B cell (primary cell): ENCODE measurements at regions of chrX and their contacts with region 1.

Region 1: GRCh38 chrX:9341291-9342201 is 123.3 kb upstream of the TBL1X start:
- DNase-seq: peak; percentile 90
- ATAC-seq: peak; percentile 61
- H3K4me3 ChIP-seq: peak overlapping the region; percentile 30 to 71 (median 47)
- H3K4me3 Mint-ChIP-seq: peak overlapping the region; percentile 84
- H3K27ac ChIP-seq: peak overlapping the region; percentile 83 to 93
- H3K27ac Mint-ChIP-seq: peak overlapping the region; percentile 92
- H3K4me1 ChIP-seq: peaks cover 29 to 33% of the 10 kb centered on the region in 2 donors
- H3K4me1 Mint-ChIP-seq: peaks cover 30% of the 10 kb centered on the region
- H3K27me3 ChIP-seq: no peaks in the 10 kb centered on the region
- H3K27me3 Mint-ChIP-seq: no peaks in the 10 kb centered on the region
- CTCF ChIP-seq: no peak

Region 2: DNA sequence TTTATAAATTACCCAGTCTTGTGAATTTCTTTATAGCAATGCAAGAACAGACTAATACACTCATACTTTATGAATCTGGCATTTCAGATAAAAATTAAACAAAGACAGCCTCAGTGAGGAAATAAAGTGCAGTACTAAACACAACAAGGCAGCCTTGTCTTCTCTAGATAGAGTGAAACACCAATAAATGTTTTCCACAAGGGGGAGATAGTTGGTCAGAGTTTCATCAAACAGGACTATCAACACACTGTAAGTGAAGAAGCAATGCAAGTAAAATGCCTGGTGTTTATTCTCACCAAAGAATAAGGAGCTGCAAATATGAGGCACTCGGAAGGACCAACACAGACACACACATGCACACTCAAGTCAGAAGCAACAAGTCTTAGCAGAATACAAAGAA is 370.4 kb before region 1 on chrX:
- CTCF ChIA-PET with region 1: no interaction called
- POLR2A ChIA-PET with region 1: interaction called, 3 read pairs
- intact Hi-C with region 1: loop called (anchors 2 kb)
- DNase-seq: peak; percentile 53
- ATAC-seq: peak; percentile 47
- H3K4me3 ChIP-seq: no peak overlapping the region
- H3K4me3 Mint-ChIP-seq: no peak overlapping the region
- H3K27ac ChIP-seq: no peak overlapping the region
- H3K27ac Mint-ChIP-seq: no peak overlapping the region
- H3K4me1 ChIP-seq: no peaks in the 10 kb centered on the region
- H3K4me1 Mint-ChIP-seq: no peaks in the 10 kb centered on the region
- H3K27me3 ChIP-seq: peaks cover 0 to 2% (median 0%) of the 10 kb centered on the region in 4 experiments
- H3K27me3 Mint-ChIP-seq: peaks cover 6% of the 10 kb centered on the region
- CTCF ChIP-seq: peak; percentile 35

Region 3: GRCh38 chrX:9141496-9141895 is 200.1 kb before region 1 on chrX:
- CTCF ChIA-PET with region 1: no interaction called
- POLR2A ChIA-PET with region 1: no interaction called
- intact Hi-C with region 1: no loop called
- DNase-seq: no peak
- ATAC-seq: no peak
- H3K4me3 ChIP-seq: no peak overlapping the region
- H3K4me3 Mint-ChIP-seq: no peak overlapping the region
- H3K27ac ChIP-seq: no peak overlapping the region
- H3K27ac Mint-ChIP-seq: no peak overlapping the region
- H3K4me1 ChIP-seq: no peaks in the 10 kb centered on the region
- H3K4me1 Mint-ChIP-seq: no peaks in the 10 kb centered on the region
- H3K27me3 ChIP-seq: no peaks in the 10 kb centered on the region
- H3K27me3 Mint-ChIP-seq: peaks cover 12% of the 10 kb centered on the region
- CTCF ChIP-seq: no peak

Region 4: GRCh38 chrX:9279234-9279544 is 62.4 kb before region 1 on chrX:
- CTCF ChIA-PET with region 1: no interaction called
- POLR2A ChIA-PET with region 1: no interaction called
- intact Hi-C with region 1: loop called (anchors 10 kb)
- DNase-seq: no peak
- ATAC-seq: no peak
- H3K4me3 ChIP-seq: no peak overlapping the region
- H3K4me3 Mint-ChIP-seq: no peak overlapping the region
- H3K27ac ChIP-seq: no peak overlapping the region
- H3K27ac Mint-ChIP-seq: no peak overlapping the region
- H3K4me1 ChIP-seq: no peaks in the 10 kb centered on the region
- H3K4me1 Mint-ChIP-seq: peaks cover 7% of the 10 kb centered on the region
- H3K27me3 ChIP-seq: no peaks in the 10 kb centered on the region
- H3K27me3 Mint-ChIP-seq: no peaks in the 10 kb centered on the region
- CTCF ChIP-seq: no peak

Region 5: GRCh38 chrX:9464435-9465371 is 123.2 kb after region 1 on chrX and contains the start of gene TBL1X:
- CTCF ChIA-PET with region 1: interaction called, 28 read pairs
- POLR2A ChIA-PET with region 1: interaction called, 20 read pairs
- intact Hi-C with region 1: loop called (anchors 1 kb)
- DNase-seq: peak; percentile 65
- ATAC-seq: peak; percentile 70
- H3K4me3 ChIP-seq: peak within 1 kb of the TSS in 4 of 5 experiments; percentile 60 to 73 (median 69)
- H3K4me3 Mint-ChIP-seq: peak within 1 kb of the TSS; percentile 78
- H3K27ac ChIP-seq: peak within 1 kb of the TSS; percentile 18 to 61
- H3K27ac Mint-ChIP-seq: peak within 1 kb of the TSS; percentile 77
- H3K4me1 ChIP-seq: peaks cover 33 to 43% of the 10 kb centered on the region in 2 donors
- H3K4me1 Mint-ChIP-seq: peaks cover 45% of the 10 kb centered on the region
- H3K27me3 ChIP-seq: no peaks in the 10 kb centered on the region
- H3K27me3 Mint-ChIP-seq: no peaks in the 10 kb centered on the region
- CTCF ChIP-seq: no peak
- total RNA-seq, gene TBL1X: 61.3 and 65.1 TPM in 2 replicates

Region 6: GRCh38 chrX:9494771-9495170 is 153.2 kb after region 1 on chrX:
- CTCF ChIA-PET with region 1: no interaction called
- POLR2A ChIA-PET with region 1: no interaction called
- intact Hi-C with region 1: no loop called
- DNase-seq: no peak
- ATAC-seq: no peak
- H3K4me3 ChIP-seq: no peak overlapping the region
- H3K4me3 Mint-ChIP-seq: no peak overlapping the region
- H3K27ac ChIP-seq: no peak overlapping the region
- H3K27ac Mint-ChIP-seq: no peak overlapping the region
- H3K4me1 ChIP-seq: no peaks in the 10 kb centered on the region
- H3K4me1 Mint-ChIP-seq: peaks cover 28% of the 10 kb centered on the region
- H3K27me3 ChIP-seq: no peaks in the 10 kb centered on the region
- H3K27me3 Mint-ChIP-seq: no peaks in the 10 kb centered on the region
- CTCF ChIP-seq: no peak

Region 7: DNA sequence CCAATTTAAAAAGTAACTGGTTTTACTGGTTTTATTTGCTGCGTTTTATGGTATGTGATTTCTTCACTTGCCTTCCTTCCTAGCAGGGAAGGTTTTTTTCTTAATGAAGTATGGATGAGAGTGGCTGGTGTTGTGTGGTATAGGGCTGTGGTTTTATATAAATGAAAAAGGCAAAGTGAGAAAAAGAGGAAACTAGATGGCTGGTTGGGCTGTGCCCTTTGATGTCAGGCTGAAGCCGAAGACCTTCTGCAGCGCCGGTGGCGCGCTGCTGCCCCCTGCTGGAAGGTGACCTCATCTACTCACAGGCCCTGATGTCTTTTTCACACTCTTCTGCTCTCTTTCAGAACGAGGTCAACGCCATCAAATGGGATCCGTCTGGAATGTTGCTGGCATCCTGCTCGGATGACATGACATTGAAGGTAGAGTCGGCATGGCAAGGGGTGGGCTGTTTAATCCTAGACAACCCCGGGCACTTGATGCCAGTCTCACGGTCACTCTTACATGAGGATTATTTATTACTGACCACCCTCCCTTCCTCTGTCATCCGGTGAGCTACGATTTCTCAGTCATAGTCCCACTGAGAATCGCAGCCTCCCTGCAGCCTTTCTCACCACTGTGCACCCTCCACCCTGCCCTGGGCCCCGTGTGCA is 367.5 kb after region 1 on chrX:
- CTCF ChIA-PET with region 1: no interaction called
- POLR2A ChIA-PET with region 1: no interaction called
- intact Hi-C with region 1: loop called (anchors 1 kb)
- DNase-seq: peak; percentile 86
- ATAC-seq: peak; percentile 89
- H3K4me3 ChIP-seq: no peak overlapping the region
- H3K4me3 Mint-ChIP-seq: peak overlapping the region; percentile 29
- H3K27ac ChIP-seq: no peak overlapping the region
- H3K27ac Mint-ChIP-seq: no peak overlapping the region
- H3K4me1 ChIP-seq: peaks cover 7 to 10% of the 10 kb centered on the region in 2 donors
- H3K4me1 Mint-ChIP-seq: peaks cover 12% of the 10 kb centered on the region
- H3K27me3 ChIP-seq: no peaks in the 10 kb centered on the region
- H3K27me3 Mint-ChIP-seq: no peaks in the 10 kb centered on the region
- CTCF ChIP-seq: peak; percentile 70